ENCODE measurements at regions of chr1 and their contacts with region 1.

Region 1: GRCh38 chr1:172322219-172323061 is 98.0 kb upstream of the C1orf105 start:
- DNase-seq: peak; percentile 88
- ATAC-seq: peak; percentile 79
- H3K4me3 ChIP-seq: no peak overlapping the region
- H3K27ac ChIP-seq: peak overlapping the region; percentile 75
- H3K4me1 ChIP-seq: peaks cover 21% of the 10 kb centered on the region
- H3K27me3 ChIP-seq: no peaks in the 10 kb centered on the region
- CTCF ChIP-seq: no peak
- POLR2A ChIP-seq: no peak
- RAD21 ChIP-seq: no peak; the same call in 1 of the 2 replicates

Region 2: DNA sequence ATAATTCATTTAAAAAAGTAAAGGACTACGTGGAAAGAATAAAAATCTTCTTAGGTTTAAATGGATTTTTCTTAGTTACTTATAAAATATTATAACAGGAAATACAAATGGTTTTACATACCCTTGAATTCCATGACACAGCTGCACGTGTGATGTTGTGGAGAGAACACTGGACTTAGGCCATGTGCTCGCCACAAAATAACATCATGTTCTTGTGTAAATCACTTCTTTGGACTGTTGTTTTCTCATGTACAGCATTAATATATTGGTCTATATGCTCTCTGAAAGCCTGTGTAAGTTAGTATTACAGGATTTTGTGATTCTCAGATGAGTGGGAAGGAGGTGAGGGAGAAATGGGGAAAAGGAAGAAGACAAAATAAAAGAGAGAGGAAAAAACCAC is 252.9 kb before region 1 on chr1:
- CTCF ChIA-PET with region 1: no interaction called
- POLR2A ChIA-PET with region 1: interaction called, 10 read pairs
- dilution Hi-C with region 1: no loop called
- in situ Hi-C with region 1: no loop called
- intact Hi-C with region 1: no loop called
- DNase-seq: peak; percentile 24
- ATAC-seq: no peak
- H3K4me3 ChIP-seq: no peak overlapping the region
- H3K27ac ChIP-seq: no peak overlapping the region
- H3K4me1 ChIP-seq: no peaks in the 10 kb centered on the region
- H3K27me3 ChIP-seq: no peaks in the 10 kb centered on the region
- CTCF ChIP-seq: no peak
- POLR2A ChIP-seq: no peak
- RAD21 ChIP-seq: no peak

Region 3: DNA sequence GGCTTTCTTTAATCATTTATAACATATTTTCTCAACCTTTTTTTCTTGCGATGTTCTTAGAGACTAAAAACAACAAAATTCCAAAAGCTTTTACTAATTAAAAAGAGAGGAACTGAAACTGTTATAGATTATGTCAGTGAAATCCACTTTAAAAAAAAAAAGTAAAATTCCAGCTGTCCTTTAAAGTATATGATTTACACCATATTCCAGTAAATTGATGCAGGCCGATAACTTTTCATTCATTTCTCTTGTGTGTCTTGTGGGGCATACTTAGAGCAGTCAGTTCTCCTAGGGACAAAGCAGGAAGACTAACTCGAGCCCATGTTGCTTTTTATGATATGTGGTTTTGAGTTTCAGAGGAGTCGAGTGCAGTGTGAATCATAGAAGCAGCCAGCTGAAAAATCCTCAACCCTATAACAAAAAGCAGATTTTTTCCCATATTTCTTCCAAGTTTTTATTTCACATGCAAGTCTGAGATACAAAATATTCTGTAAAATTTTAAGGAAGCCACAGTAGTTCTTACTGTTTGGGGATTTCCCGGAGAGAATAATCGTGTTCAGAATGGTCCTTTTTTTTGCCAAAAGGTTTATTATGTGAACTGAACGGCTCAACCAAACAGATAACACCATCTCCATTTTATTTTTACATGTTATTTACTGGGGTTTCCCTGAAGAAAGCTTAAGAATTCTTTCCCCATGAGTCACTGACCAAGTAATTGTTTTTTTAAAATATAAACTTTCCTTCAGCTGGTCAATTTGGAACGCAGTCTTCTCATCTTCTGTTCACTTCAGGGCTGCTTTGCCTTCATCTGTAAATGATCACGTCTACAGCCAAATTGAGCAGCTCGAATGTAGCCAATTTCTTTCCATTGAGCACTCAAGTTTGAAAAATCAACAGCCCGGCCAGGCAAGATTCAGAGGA is 21.1 kb after region 1 on chr1:
- CTCF ChIA-PET with region 1: no interaction called
- POLR2A ChIA-PET with region 1: no interaction called
- dilution Hi-C with region 1: no loop called
- in situ Hi-C with region 1: no loop called
- intact Hi-C with region 1: loop called (anchors 2 kb)
- DNase-seq: peak; percentile 91
- ATAC-seq: peak; percentile 88
- H3K4me3 ChIP-seq: peak overlapping the region; percentile 31; the same call in 1 of the 2 replicates
- H3K27ac ChIP-seq: peak overlapping the region; percentile 56; the same call in 1 of the 2 replicates
- H3K4me1 ChIP-seq: peaks cover 9% of the 10 kb centered on the region
- H3K27me3 ChIP-seq: no peaks in the 10 kb centered on the region
- CTCF ChIP-seq: no peak
- POLR2A ChIP-seq: peak; percentile 37; the same call in 1 of the 2 replicates
- RAD21 ChIP-seq: no peak

Region 4: GRCh38 chr1:172357753-172358385 is 35.4 kb after region 1 on chr1:
- CTCF ChIA-PET with region 1: interaction called, 11 read pairs
- POLR2A ChIA-PET with region 1: no interaction called
- dilution Hi-C with region 1: no loop called
- in situ Hi-C with region 1: no loop called
- intact Hi-C with region 1: no loop called
- DNase-seq: no peak
- ATAC-seq: no peak
- H3K4me3 ChIP-seq: no peak overlapping the region
- H3K27ac ChIP-seq: peak overlapping the region; percentile 57
- H3K4me1 ChIP-seq: peaks cover 10% of the 10 kb centered on the region
- H3K27me3 ChIP-seq: no peaks in the 10 kb centered on the region
- CTCF ChIP-seq: no peak
- POLR2A ChIP-seq: no peak
- RAD21 ChIP-seq: no peak